Panc1 (cell line): ENCODE measurements at regions of chr17 and their contacts with region 1.

Region 1: GRCh38 chr17:18141210-18141803 is 32.8 kb downstream of the MYO15A start:
- DNase-seq: peak; percentile 41
- ATAC-seq: peak; percentile 57; the same call in 1 of the 2 replicates
- H3K4me3 ChIP-seq: no peak overlapping the region
- H3K27ac ChIP-seq: no peak overlapping the region
- H3K4me1 ChIP-seq: no peaks in the 10 kb centered on the region
- H3K27me3 ChIP-seq: no peaks in the 10 kb centered on the region
- CTCF ChIP-seq: peak; percentile 79

Region 2: GRCh38 chr17:17573912-17574311 is 567.4 kb before region 1 on chr17:
- CTCF ChIA-PET with region 1: interaction called, 10 read pairs
- POLR2A ChIA-PET with region 1: no interaction called
- in situ Hi-C with region 1: no loop called
- intact Hi-C with region 1: no loop called
- DNase-seq: no peak
- ATAC-seq: no peak
- H3K4me3 ChIP-seq: no peak overlapping the region
- H3K27ac ChIP-seq: no peak overlapping the region
- H3K4me1 ChIP-seq: no peaks in the 10 kb centered on the region
- H3K27me3 ChIP-seq: no peaks in the 10 kb centered on the region
- CTCF ChIP-seq: no peak

Region 3: GRCh38 chr17:18076936-18077335 is 64.4 kb before region 1 on chr17:
- CTCF ChIA-PET with region 1: no interaction called
- POLR2A ChIA-PET with region 1: interaction called, 10 read pairs
- in situ Hi-C with region 1: no loop called
- intact Hi-C with region 1: no loop called
- DNase-seq: no peak
- ATAC-seq: no peak
- H3K4me3 ChIP-seq: no peak overlapping the region
- H3K27ac ChIP-seq: no peak overlapping the region
- H3K4me1 ChIP-seq: no peaks in the 10 kb centered on the region
- H3K27me3 ChIP-seq: no peaks in the 10 kb centered on the region
- CTCF ChIP-seq: no peak

Region 4: DNA sequence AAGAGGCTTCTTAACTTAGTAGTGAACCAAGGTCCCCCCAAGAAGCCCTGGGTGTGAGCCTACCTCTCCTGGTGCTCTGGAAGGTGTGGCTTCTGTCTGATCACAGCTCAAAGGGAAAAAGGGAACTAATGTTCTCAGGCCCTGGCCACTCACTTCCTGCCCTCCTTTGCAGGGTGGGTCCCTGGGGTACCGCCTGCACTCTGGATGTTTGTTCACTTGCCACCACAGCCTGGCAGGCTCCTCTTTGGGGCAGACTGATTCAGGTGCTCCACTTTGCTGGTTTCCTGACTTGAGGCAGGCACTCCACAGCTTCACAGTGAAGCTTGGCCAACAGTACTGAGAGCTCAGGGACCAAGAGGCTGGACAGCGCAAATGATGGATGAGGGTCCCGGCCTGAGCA is 38.7 kb before region 1 on chr17:
- CTCF ChIA-PET with region 1: interaction called, 10 read pairs
- POLR2A ChIA-PET with region 1: no interaction called
- in situ Hi-C with region 1: no loop called
- intact Hi-C with region 1: no loop called
- DNase-seq: no peak
- ATAC-seq: no peak
- H3K4me3 ChIP-seq: no peak overlapping the region
- H3K27ac ChIP-seq: no peak overlapping the region
- H3K4me1 ChIP-seq: no peaks in the 10 kb centered on the region
- H3K27me3 ChIP-seq: no peaks in the 10 kb centered on the region
- CTCF ChIP-seq: no peak

Region 5: GRCh38 chr17:18217412-18218015 is 76.2 kb after region 1 on chr17:
- CTCF ChIA-PET with region 1: interaction called, 8 read pairs
- POLR2A ChIA-PET with region 1: no interaction called
- in situ Hi-C with region 1: no loop called
- intact Hi-C with region 1: loop called (anchors 10 kb)
- DNase-seq: peak; percentile 56
- ATAC-seq: peak; percentile 92
- H3K4me3 ChIP-seq: no peak overlapping the region
- H3K27ac ChIP-seq: no peak overlapping the region
- H3K4me1 ChIP-seq: peaks cover 7% of the 10 kb centered on the region; the same call in 1 of the 2 replicates
- H3K27me3 ChIP-seq: no peaks in the 10 kb centered on the region
- CTCF ChIP-seq: peak; percentile 93